ENCODE measurements at regions of chr16 and their contacts with region 1.

Region 1: GRCh38 chr16:28491970-28492474 is at the start of gene CLN3:
- DNase-seq: peak; percentile 94
- ATAC-seq: peak; percentile 88
- H3K4me3 ChIP-seq: peak within 1 kb of the TSS; percentile 99
- H3K27ac ChIP-seq: peak within 1 kb of the TSS; percentile 99
- H3K4me1 ChIP-seq: peaks cover 15% of the 10 kb centered on the region
- H3K27me3 ChIP-seq: no peaks in the 10 kb centered on the region
- CTCF ChIP-seq: no peak
- total RNA-seq, gene CLN3: 73.7 TPM

Region 2: DNA sequence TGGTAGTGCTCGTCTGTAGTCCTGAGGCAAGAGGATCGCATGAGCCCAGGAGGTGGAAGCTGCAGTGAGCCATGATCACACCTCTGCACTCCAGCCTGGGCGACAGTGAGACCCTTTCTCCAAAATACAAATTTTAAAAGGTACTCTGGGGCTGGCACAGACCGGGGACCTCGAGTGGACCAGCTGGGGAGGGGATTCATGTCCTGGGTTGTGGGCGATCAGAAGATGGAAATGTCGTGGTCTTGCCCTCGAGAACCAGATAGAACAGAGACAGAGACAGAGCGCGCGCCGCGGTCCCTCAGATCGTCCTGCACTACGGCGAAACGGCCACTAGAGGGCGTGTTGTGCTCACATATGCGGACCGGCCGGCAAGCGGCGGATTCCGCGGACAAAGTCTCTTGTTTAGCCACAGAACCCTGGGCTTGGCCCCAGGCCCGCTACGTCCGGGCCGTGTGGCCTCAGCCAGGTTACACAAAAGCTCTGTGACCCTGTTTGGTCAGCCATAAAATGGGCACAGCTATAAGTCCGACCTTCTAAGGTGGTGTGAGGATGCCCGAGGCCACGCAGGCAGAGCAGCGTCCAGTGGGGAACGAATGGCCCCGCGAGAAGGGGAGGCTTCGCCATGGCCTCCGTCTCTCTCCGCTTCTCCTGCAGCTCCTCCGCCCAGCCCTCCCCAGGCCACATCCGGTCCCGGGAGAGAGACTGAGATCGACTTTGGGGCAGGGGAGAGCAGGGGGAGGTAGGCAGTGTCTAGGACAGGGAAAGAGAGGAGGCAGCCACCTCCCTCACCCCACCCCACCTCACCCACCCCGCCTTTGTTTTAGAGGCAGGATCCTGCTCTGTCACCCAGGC is 214.3 kb before region 1 on chr16:
- intact Hi-C with region 1: no loop called
- DNase-seq: peak; percentile 91
- ATAC-seq: peak; percentile 97
- H3K4me3 ChIP-seq: peak overlapping the region; percentile 43
- H3K27ac ChIP-seq: no peak overlapping the region
- H3K4me1 ChIP-seq: peaks cover 9% of the 10 kb centered on the region
- H3K27me3 ChIP-seq: peaks cover 21% of the 10 kb centered on the region
- CTCF ChIP-seq: peak; percentile 98

Region 3: DNA sequence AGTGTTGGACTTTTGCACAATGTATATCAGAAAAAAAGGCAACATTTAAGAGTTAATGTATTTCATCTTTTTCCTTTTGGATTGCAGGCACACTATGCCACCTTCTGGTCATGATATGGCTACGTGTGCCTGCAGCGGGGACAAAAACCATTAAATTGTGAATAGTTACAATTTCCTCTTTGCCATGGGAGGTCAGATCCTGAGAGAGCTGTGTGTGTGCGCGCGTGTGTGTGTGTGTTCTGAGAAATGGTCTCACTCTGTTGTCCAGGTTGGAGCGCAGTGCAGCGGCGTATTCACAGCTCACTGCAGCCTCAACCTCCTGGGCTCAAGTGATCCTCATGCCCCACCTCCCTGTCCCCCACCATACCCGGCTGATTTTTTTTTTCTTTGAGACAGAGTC is 57.4 kb after region 1 on chr16:
- intact Hi-C with region 1: loop called (anchors 10 kb)
- DNase-seq: no peak
- ATAC-seq: peak; percentile 38
- H3K4me3 ChIP-seq: no peak overlapping the region
- H3K27ac ChIP-seq: no peak overlapping the region
- H3K4me1 ChIP-seq: peaks cover 4% of the 10 kb centered on the region
- H3K27me3 ChIP-seq: no peaks in the 10 kb centered on the region
- CTCF ChIP-seq: peak; percentile 58

Region 4: GRCh38 chr16:28572696-28573510 is 80.9 kb after region 1 on chr16:
- intact Hi-C with region 1: no loop called
- DNase-seq: no peak
- ATAC-seq: peak; percentile 60
- H3K4me3 ChIP-seq: no peak overlapping the region
- H3K27ac ChIP-seq: peak overlapping the region; percentile 8
- H3K4me1 ChIP-seq: peaks cover 27% of the 10 kb centered on the region
- H3K27me3 ChIP-seq: no peaks in the 10 kb centered on the region
- CTCF ChIP-seq: no peak

Region 5: DNA sequence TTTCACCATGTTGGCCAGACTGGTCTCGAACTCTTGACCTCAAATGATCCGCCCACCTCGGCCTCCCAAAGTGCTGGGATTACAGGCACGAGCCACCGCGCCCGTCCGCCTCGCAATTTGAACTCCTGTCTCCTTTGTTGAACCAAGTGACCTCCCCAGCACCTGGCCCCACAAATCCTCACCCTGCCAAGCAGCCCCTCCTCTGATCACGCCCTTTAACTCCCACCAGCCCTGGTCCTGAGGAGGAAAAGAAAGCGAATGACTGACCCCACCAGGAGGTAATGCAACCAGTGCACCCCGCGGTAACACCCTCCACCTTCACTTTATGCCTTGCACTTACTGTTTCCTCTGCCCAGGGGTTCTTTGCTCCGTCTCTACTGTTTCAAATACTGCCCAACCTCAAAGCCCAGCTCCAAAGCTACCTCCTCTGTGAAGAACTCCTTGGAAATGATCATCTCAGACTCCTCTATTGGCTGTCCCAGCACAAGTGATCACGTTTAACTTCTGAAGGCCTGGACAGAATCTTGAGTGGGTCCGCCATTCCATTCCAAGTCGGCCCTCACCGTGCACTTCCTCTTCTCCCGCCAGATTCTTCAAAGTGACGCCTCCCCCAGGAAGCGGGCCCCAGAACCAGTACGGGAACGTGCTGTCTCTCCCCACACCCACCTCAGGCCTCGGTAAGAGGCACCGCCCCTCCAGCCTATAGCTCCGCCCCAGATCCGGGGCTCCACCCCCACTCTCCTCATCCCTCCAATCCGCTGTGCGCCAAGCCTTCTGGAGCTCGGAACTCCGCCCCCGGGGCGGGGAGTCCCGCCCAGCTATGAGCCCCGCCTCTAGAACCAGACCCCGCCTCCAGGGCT is 444.1 kb after region 1 on chr16:
- intact Hi-C with region 1: no loop called
- DNase-seq: peak; percentile 92
- ATAC-seq: peak; percentile 99
- H3K4me3 ChIP-seq: peak overlapping the region; percentile 29
- H3K27ac ChIP-seq: no peak overlapping the region
- H3K4me1 ChIP-seq: no peaks in the 10 kb centered on the region
- H3K27me3 ChIP-seq: no peaks in the 10 kb centered on the region
- CTCF ChIP-seq: no peak

Measured in upper lobe of right lung (tissue), 1 donor.